HCT116 (cell line): ENCODE measurements at regions of chr5 and their contacts with region 1.

Region 1: DNA sequence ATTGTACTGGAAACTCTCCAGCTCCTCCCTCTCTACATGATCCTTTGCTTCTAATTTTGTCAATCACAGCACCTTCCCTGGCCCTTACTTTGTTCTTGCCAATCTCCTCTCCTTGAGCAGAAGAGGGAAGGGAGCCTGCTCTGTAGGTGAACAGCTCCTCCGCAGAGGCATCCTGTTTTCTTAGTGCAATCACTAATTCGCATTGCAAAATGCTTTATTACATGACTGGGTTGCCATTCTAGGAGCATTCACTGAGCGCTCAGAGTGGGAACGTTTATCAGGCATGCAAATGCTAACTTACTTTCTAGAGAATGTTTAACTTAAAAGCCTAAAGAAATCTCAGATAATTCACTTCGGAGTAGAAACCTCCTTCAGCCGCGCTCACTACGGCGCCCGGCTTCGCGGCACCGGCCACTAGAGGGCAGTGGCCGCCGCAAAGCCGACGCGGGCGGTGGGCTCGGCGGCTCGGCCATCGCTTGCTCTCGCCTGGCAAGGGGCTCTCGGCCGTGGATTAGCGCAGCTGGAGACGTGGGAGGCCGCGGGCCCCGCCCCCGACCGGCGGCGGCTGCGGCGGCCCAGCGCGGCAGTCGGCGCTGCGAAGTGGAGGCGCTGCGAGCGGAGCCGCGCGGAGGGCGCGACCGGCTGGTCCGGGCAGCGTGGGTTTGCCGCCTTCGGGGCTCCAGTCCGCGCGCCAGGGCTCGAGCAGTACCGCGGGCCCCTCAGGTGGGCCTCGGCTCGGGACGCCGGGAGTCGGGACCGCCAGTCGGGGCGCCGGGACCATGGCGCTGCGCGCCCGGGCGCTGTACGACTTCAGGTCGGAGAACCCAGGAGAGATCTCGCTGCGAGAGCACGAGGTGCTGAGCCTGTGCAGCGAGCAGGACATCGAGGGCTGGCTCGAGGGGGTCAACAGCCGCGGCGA is at the start of gene SNX18:
- DNase-seq: peak; percentile 74
- ATAC-seq: peak; percentile 88
- H3K4me3 ChIP-seq: peak within 1 kb of the TSS; percentile 65 to 70
- H3K27ac ChIP-seq: peak within 1 kb of the TSS; percentile 78
- H3K4me1 ChIP-seq: peaks cover 2 to 16% of the 10 kb centered on the region in 2 experiments; a peak in 1 of 4 replicates
- H3K27me3 ChIP-seq: no peaks in the 10 kb centered on the region
- CTCF ChIP-seq: peak; percentile 89 to 95 (median 92)
- POLR2A ChIP-seq: peak; percentile 71
- RAD21 ChIP-seq: peak; percentile 93
- total RNA-seq, gene SNX18: 16.0 TPM

Region 2: DNA sequence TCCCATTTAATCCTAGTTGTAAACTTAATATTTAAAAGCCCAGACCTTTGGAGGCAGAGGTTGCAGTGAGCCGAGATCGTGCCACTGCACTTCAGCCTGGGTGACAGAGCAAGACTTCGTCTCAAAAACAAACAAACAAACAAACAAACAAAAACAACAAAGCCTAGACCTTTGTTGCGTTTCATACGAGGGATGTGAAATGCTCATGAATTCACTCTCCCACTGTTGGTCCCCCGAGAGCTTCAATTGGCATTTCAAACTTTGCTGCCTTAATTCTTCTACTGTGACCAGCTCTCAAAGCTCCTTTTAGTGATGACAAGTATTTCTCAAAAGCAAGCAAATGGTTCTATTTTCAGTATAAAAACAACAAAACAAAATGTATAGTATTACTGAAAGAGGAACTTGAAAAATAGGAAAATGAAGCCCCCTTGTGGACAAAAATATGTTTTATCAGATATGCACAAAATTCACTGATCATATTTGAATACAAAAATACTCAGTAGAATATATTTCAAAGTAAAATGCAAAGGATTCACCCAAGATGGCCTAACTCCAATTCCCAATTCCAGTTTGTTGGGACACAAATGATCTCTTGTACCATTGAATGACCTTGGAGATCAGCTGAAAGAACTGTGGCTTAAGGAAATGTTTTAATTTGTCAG is 327.6 kb after region 1 on chr5:
- CTCF ChIA-PET with region 1: interaction called, 44 read pairs
- POLR2A ChIA-PET with region 1: interaction called, 3 read pairs
- RAD21 ChIA-PET with region 1: interaction called, 8 to 9 read pairs
- intact Hi-C with region 1: loop called (anchors 1 kb)
- DNase-seq: peak; percentile 31
- ATAC-seq: no peak
- H3K4me3 ChIP-seq: no peak overlapping the region
- H3K27ac ChIP-seq: no peak overlapping the region
- H3K4me1 ChIP-seq: no peaks in the 10 kb centered on the region
- H3K27me3 ChIP-seq: no peaks in the 10 kb centered on the region
- CTCF ChIP-seq: peak; percentile 23 to 66 (median 64); a peak in 3 of 6 replicates
- POLR2A ChIP-seq: no peak
- RAD21 ChIP-seq: peak; percentile 72

Region 3: GRCh38 chr5:54895816-54896341 is 378.4 kb after region 1 on chr5:
- CTCF ChIA-PET with region 1: interaction called, 25 read pairs
- POLR2A ChIA-PET with region 1: no interaction called
- RAD21 ChIA-PET with region 1: interaction called in 1 of 2 experiments, 3 read pairs
- intact Hi-C with region 1: no loop called
- DNase-seq: peak; percentile 39
- ATAC-seq: peak; percentile 90
- H3K4me3 ChIP-seq: no peak overlapping the region
- H3K27ac ChIP-seq: no peak overlapping the region
- H3K4me1 ChIP-seq: no peaks in the 10 kb centered on the region
- H3K27me3 ChIP-seq: peaks cover 39% of the 10 kb centered on the region
- CTCF ChIP-seq: peak; percentile 51 to 60 (median 59); a peak in 5 of 6 replicates
- POLR2A ChIP-seq: no peak
- RAD21 ChIP-seq: peak; percentile 74

Region 4: DNA sequence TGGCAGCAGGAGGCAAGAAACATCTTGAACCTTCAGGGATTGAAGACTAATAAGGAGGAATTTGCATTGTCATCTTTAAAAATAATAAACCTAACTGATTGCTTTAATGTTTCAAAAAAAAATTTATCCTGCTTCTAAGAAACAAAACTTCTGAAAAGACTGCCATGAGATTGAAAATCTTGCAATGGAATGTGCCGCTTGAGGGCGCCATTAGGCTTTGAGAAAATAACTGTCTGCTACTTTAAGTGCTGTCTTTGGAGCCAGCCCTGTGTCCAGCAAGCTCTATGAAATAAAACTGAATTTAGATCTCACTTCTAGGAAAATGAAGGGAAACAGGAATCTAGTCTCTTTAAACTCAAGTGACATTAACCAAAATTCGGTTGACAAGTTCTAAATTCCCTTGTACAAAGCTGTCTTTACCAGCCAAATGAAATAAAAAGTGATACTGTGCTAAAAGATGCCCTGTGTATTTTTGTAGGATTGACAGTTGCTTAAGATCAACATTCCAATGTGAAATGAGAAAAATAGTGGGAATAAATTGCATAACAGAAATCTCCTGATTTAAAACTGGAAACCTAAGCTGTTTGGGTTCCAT is 388.6 kb after region 1 on chr5:
- CTCF ChIA-PET with region 1: interaction called, 12 read pairs
- POLR2A ChIA-PET with region 1: no interaction called
- RAD21 ChIA-PET with region 1: no interaction called
- intact Hi-C with region 1: no loop called
- DNase-seq: peak; percentile 44
- ATAC-seq: peak; percentile 62
- H3K4me3 ChIP-seq: no peak overlapping the region
- H3K27ac ChIP-seq: no peak overlapping the region
- H3K4me1 ChIP-seq: no peaks in the 10 kb centered on the region
- H3K27me3 ChIP-seq: peaks cover 69% of the 10 kb centered on the region
- CTCF ChIP-seq: peak; percentile 55 to 79 (median 75)
- POLR2A ChIP-seq: no peak
- RAD21 ChIP-seq: peak; percentile 77